ENCODE measurements at regions of chr19 and their contacts with region 1.

Region 1: GRCh38 chr19:19203012-19203856 is at the start of gene NR2C2AP:
- H3K4me3 ChIP-seq: peak within 1 kb of the TSS; percentile 62
- H3K27ac ChIP-seq: peak within 1 kb of the TSS; percentile 62
- H3K4me1 ChIP-seq: no peaks in the 10 kb centered on the region
- CTCF ChIP-seq: no peak

Region 2: GRCh38 chr19:18675779-18676178 is 527.5 kb before region 1 on chr19:
- CTCF ChIA-PET with region 1: no interaction called
- POLR2A ChIA-PET with region 1: no interaction called
- H3K4me3 ChIP-seq: no peak overlapping the region
- H3K27ac ChIP-seq: no peak overlapping the region
- H3K4me1 ChIP-seq: no peaks in the 10 kb centered on the region
- CTCF ChIP-seq: no peak; the same call in 1 of the 2 replicates

Region 3: GRCh38 chr19:19115954-19116353 is 87.3 kb before region 1 on chr19:
- CTCF ChIA-PET with region 1: no interaction called
- POLR2A ChIA-PET with region 1: no interaction called
- H3K4me3 ChIP-seq: no peak overlapping the region
- H3K27ac ChIP-seq: no peak overlapping the region
- H3K4me1 ChIP-seq: 0 out of 2 replicates have a peak, but pooled peaks cover 3% of the 10 kb centered on the region
- CTCF ChIP-seq: peak; percentile 40; the same call in 1 of the 2 replicates

Region 4: DNA sequence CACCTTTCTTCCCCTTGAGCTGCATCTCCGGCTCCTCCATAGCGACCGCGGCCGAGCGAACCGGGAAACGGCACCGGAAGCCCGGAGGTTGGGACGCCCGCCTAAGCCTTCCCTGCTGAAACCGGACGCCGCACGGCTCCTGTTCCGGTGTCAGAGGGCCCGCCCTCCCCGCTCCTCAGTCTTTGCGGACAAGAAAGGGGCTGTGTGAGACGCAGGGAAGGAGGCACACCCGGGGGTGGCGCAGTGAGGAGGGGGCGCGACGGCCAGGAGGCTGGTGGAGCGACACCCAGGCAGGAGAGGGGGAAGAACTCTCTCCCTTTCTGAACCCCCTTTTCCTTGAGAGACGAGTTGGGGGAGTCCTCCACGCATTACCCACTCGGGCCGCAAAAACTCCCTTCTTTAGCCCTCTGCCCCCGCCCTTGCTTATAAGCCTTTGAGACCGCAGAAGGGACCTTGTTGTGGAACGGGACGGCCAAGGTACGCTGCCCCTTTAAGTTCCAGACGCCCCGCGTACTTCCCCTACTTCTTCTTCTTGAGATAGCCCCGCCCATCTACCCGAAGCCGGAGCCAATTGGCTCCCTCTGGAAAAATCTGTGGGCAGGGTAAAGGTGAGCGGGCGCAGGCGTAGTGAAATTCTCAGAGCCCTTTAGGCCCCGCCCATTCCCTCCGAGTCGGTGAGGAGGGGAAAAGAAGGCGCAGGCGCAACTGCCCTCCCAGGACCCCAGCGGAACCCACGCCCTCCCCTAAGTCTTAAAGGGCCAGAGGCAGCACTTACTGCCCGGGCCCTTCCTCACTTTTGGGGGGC is 11.0 kb before region 1 on chr19 and contains the starts of genes BORCS8 and RFXANK:
- CTCF ChIA-PET with region 1: interaction called, 3 read pairs
- POLR2A ChIA-PET with region 1: interaction called, 60 read pairs
- H3K4me3 ChIP-seq: peak within 1 kb of the TSS; percentile 93
- H3K27ac ChIP-seq: peak within 1 kb of the TSS; percentile 84
- H3K4me1 ChIP-seq: no peaks in the 10 kb centered on the region
- CTCF ChIP-seq: peak; percentile 18; the same call in 1 of the 2 replicates

Region 5: DNA sequence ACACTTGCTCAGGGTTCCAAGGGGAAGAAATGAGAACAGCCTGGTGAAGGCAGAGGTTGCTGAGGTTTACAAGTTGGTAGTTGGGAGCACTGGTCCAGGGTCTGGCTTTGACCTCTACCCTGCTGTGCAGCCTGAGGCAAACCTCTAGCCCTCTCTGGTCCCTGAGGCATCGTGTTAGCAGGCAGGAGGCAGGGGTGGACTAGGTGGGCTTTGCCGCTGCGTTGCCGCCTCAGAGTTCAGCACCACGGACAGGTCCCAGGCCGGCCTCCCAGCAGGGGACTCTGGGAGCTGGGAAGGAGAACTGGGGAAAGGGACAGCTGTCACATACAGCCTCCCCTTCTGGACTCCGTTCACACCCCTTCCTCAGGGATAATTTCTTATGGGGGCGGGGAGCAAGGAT is 11.7 kb after region 1 on chr19:
- CTCF ChIA-PET with region 1: no interaction called
- POLR2A ChIA-PET with region 1: no interaction called
- H3K4me3 ChIP-seq: no peak overlapping the region
- H3K27ac ChIP-seq: no peak overlapping the region
- H3K4me1 ChIP-seq: no peaks in the 10 kb centered on the region
- CTCF ChIP-seq: no peak